Activated CD4-positive, alpha-beta T cell treated with anti-CD3 and anti-CD28 coated beads for 36 hours (primary cell): ENCODE measurements at regions of chr3 and their contacts with region 1.

Region 1: DNA sequence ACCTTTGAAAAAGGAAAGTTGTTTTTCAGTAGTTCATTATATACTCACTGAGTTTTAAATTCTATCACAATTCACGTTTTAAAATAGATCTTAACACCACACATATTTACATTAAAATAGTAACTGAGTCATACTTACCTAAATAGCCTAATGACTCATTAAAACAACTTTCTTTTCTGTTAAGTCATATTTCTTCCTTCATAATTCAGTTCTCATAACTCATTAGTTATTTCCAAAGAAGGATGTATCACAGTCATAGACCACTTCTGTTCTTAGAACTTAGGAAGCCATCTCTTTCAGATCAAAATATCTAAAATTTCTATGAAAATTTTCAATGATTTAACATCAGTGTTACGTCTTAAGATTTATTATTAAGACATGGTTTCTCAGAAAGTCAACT is 885.9 kb downstream of the FHIT start:
- DNase-seq: no peak
- ATAC-seq: peak; percentile 81
- H3K4me3 Mint-ChIP-seq: no peak overlapping the region
- H3K27ac Mint-ChIP-seq: no peak overlapping the region
- H3K4me1 Mint-ChIP-seq: peaks cover 28% of the 10 kb centered on the region
- H3K27me3 Mint-ChIP-seq: no peaks in the 10 kb centered on the region

Region 2: GRCh38 chr3:60055765-60056164 is 309.6 kb before region 1 on chr3:
- CTCF ChIA-PET with region 1: no interaction called
- POLR2A ChIA-PET with region 1: no interaction called
- intact Hi-C with region 1: no loop called
- DNase-seq: peak; percentile 20
- ATAC-seq: peak; percentile 61
- H3K4me3 Mint-ChIP-seq: peak overlapping the region; percentile 35
- H3K27ac Mint-ChIP-seq: peak overlapping the region; percentile 86
- H3K4me1 Mint-ChIP-seq: peaks cover 89% of the 10 kb centered on the region
- H3K27me3 Mint-ChIP-seq: no peaks in the 10 kb centered on the region

Region 3: DNA sequence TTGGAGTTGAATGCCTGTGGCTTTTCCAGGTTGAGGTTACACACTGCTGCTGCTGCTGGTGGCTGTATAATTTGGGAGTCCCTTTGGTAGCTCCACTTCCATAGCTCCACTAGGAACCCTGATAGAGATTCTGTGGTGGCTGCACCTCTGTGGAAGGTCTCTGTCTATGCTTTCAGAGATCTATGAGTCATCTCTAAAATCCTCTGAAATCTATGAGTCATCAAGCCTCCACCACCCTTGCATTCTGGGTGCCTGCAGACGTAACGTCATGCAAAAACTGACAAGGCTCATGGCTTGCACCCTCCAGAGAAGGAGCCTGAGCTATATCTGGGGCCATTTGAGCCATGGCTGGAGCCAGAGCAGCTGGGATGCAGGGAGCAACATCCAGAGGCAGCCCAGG is 278.5 kb before region 1 on chr3:
- CTCF ChIA-PET with region 1: no interaction called
- POLR2A ChIA-PET with region 1: no interaction called
- intact Hi-C with region 1: loop called in 1 of 2 experiments (anchors 2 kb)
- DNase-seq: peak; percentile 74
- ATAC-seq: peak; percentile 96
- H3K4me3 Mint-ChIP-seq: no peak overlapping the region
- H3K27ac Mint-ChIP-seq: peak overlapping the region; percentile 84
- H3K4me1 Mint-ChIP-seq: peaks cover 55% of the 10 kb centered on the region
- H3K27me3 Mint-ChIP-seq: no peaks in the 10 kb centered on the region

Region 4: GRCh38 chr3:60192297-60193114 is 172.9 kb before region 1 on chr3:
- CTCF ChIA-PET with region 1: no interaction called
- POLR2A ChIA-PET with region 1: no interaction called
- intact Hi-C with region 1: loop called in 1 of 2 experiments (anchors 1 kb)
- DNase-seq: peak; percentile 61
- ATAC-seq: peak; percentile 87
- H3K4me3 Mint-ChIP-seq: no peak overlapping the region
- H3K27ac Mint-ChIP-seq: peak overlapping the region; percentile 81
- H3K4me1 Mint-ChIP-seq: peaks cover 40% of the 10 kb centered on the region
- H3K27me3 Mint-ChIP-seq: no peaks in the 10 kb centered on the region

Region 5: DNA sequence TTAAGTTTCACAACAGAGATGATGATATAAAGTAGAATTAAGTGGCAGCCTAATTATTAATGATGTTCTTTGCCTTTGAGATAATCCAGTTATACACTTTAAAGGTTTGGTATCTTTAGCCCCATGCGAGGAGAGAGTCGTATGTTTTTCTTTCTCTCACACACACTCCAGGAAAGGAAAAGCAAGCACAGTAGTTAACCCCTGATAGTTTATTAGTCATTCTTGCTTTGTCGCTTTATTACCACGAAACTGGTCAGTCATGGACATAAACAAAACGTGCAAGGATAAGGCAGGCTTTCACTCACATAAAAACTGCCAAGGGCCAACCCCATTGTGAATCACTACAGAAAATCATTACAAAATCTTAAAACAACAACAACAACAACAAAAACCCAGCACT is 19.0 kb after region 1 on chr3:
- CTCF ChIA-PET with region 1: no interaction called
- POLR2A ChIA-PET with region 1: no interaction called
- intact Hi-C with region 1: no loop called
- DNase-seq: no peak
- ATAC-seq: no peak
- H3K4me3 Mint-ChIP-seq: no peak overlapping the region
- H3K27ac Mint-ChIP-seq: no peak overlapping the region
- H3K4me1 Mint-ChIP-seq: no peaks in the 10 kb centered on the region
- H3K27me3 Mint-ChIP-seq: no peaks in the 10 kb centered on the region